ENCODE measurements at regions of chr14 and their contacts with region 1.

Region 1: GRCh38 chr14:71403656-71404055 is 496.4 kb downstream of the PCNX1 start:
- DNase-seq: peak; percentile 15
- H3K4me3 Mint-ChIP-seq: no peak overlapping the region
- H3K27ac Mint-ChIP-seq: peak overlapping the region; percentile 67
- H3K4me1 Mint-ChIP-seq: peaks cover 56% of the 10 kb centered on the region
- H3K27me3 Mint-ChIP-seq: no peaks in the 10 kb centered on the region

Region 2: GRCh38 chr14:71362920-71363584 is 40.6 kb before region 1 on chr14:
- intact Hi-C with region 1: loop called (anchors 5 kb)
- DNase-seq: no peak
- H3K4me3 Mint-ChIP-seq: no peak overlapping the region
- H3K27ac Mint-ChIP-seq: no peak overlapping the region
- H3K4me1 Mint-ChIP-seq: peaks cover 50% of the 10 kb centered on the region
- H3K27me3 Mint-ChIP-seq: no peaks in the 10 kb centered on the region

Region 3: DNA sequence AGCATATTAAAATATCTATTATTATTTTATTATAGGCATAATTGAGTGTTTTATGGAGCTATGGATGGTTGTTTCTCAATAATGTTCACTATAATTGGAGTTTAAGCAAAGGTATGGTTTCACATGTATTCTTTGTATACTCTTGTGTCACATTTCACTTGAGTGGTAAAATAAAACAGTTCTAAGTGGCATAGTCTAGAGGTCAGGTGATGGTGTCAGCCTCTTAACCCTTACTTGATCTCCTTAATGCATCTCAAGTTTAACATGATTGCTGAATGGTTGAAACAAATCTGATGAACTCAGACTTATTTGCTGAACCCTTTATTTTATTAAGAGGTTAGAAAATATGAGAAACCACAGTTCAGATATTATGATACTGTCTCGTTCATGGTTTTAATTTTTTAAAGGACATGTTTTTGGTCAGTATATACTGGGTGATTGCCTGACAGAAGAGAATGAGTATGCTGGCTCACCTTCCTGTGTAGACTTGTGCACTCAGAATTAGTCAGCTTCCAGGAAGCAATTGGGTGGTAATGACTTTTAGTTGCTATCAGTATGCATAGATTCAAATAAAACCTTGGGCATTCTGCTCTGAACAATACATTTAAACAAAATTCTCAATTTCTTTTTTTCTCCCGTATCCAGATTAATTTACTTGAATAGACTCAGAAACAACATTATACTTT is 31.8 kb before region 1 on chr14:
- intact Hi-C with region 1: loop called (anchors 2 kb)
- DNase-seq: no peak
- H3K4me3 Mint-ChIP-seq: no peak overlapping the region
- H3K27ac Mint-ChIP-seq: peak overlapping the region; percentile 1
- H3K4me1 Mint-ChIP-seq: peaks cover 23% of the 10 kb centered on the region
- H3K27me3 Mint-ChIP-seq: no peaks in the 10 kb centered on the region

Region 4: DNA sequence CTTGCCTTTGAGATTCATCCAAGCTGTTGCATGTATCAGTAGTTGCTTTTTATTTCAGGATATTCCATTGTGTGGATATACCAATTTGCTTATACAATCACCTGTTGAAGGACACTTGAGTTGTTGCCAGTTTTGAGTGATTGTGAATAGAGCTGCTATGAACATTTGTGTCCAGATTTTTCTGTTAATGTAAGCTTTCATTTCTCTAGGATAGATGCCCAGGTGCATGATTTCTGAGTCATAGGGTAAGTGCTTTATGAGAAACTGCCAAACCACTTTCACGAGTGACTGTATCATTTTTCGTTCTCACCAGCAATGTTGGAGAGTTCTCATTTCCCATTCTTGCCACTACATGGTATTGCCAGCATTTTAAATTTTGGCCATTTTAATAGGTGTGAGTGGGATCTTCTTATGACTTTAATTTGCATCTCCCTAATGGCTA is 94.0 kb after region 1 on chr14:
- intact Hi-C with region 1: loop called (anchors 5 kb)
- DNase-seq: peak; percentile 5
- H3K4me3 Mint-ChIP-seq: no peak overlapping the region
- H3K27ac Mint-ChIP-seq: no peak overlapping the region
- H3K4me1 Mint-ChIP-seq: peaks cover 15% of the 10 kb centered on the region
- H3K27me3 Mint-ChIP-seq: no peaks in the 10 kb centered on the region

Region 5: GRCh38 chr14:71753126-71753830 is 349.6 kb after region 1 on chr14:
- intact Hi-C with region 1: loop called (anchors 5 kb)
- DNase-seq: peak; percentile 34
- H3K4me3 Mint-ChIP-seq: peak overlapping the region; percentile 19
- H3K27ac Mint-ChIP-seq: no peak overlapping the region
- H3K4me1 Mint-ChIP-seq: peaks cover 18% of the 10 kb centered on the region
- H3K27me3 Mint-ChIP-seq: peaks cover 12% of the 10 kb centered on the region

Measured in activated T-helper 1 cell treated with anti-CD3 and anti-CD28 coated beads, Interleukin-12 subunit alpha, Interleukin-12 subunit beta, Interleukin-2, Interleukin-4 antibody, amounts not matched to agents 30 ng/mL and 10 ng/mL and 1 ng/mL, durations not matched to agents 14 hours and 24 hours and 36 hours (primary cell).